Ascending aorta (tissue), 2 donors: ENCODE measurements at regions of chr15 and their contacts with region 1.

Region 1: DNA sequence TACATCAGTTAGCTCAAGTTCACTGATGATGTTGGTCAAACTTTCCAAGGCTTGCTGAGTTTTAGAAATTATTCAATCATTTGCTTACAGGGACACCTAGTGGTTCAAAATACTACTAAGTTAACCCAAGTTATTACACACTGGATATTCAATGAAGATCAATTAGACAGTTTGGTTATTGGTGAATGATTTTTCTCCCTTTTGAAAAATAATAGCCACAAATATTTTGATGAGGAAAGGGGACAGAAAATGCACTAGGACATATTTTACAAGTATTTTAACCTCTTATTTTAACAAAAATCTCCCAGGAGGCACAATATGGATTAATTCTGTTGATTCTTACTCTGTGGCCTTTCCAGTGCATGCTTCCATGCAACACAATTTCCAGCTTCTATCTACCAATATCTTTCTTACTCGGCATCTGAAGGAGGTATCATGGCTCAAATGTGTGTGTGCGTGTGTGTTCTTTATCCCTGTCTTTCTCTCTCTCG is 20.1 kb upstream of the GOLGA6L2 start:
- DNase-seq: no peak
- H3K4me3 ChIP-seq: no peak overlapping the region
- H3K27ac ChIP-seq: no peak overlapping the region
- H3K4me1 ChIP-seq: peaks cover 0 to 3% of the 10 kb centered on the region in 2 donors
- H3K27me3 ChIP-seq: no peaks in the 10 kb centered on the region
- CTCF ChIP-seq: peak in 2 of 3 experiments; percentile 34 to 51

Region 2: GRCh38 chr15:23039151-23039916 is 427.8 kb before region 1 on chr15 and contains the start of gene TUBGCP5:
- intact Hi-C with region 1: loop called (anchors 5 kb)
- DNase-seq: peak; percentile 91 to 99
- H3K4me3 ChIP-seq: peak within 1 kb of the TSS; percentile 75 to 85
- H3K27ac ChIP-seq: peak within 1 kb of the TSS; percentile 68 to 76
- H3K4me1 ChIP-seq: peaks cover 0 to 8% of the 10 kb centered on the region in 2 donors
- H3K27me3 ChIP-seq: no peaks in the 10 kb centered on the region
- CTCF ChIP-seq: peak in 2 of 3 experiments; percentile 46 to 51
- total RNA-seq, gene TUBGCP5: 17.1 TPM

Region 3: GRCh38 chr15:23372284-23372683 is 94.9 kb before region 1 on chr15:
- intact Hi-C with region 1: loop called (anchors 5 kb)
- DNase-seq: peak; percentile 12 to 68
- H3K4me3 ChIP-seq: no peak overlapping the region
- H3K27ac ChIP-seq: peak overlapping the region; percentile 66 to 67
- H3K4me1 ChIP-seq: peaks cover 2 to 19% of the 10 kb centered on the region in 2 donors
- H3K27me3 ChIP-seq: no peaks in the 10 kb centered on the region
- CTCF ChIP-seq: no peak

Region 4: DNA sequence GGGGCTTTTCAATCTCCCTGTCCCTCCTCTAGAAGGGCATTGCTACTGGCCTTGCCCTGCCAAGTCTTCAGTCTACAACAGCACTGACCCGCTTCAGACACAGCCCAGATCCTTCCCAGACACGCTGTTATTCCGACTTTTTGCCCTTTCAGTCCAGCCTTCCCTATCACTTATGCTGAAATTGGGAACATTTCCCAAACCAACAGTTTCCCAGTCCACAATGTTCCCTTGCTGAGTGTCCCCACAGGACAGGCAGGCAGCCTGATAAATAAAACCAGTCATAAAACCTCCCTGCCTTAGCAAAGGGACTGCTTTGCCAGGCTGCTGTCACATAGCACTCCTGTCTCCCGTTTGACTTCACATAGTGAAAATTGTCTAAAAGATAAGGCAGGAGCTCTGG is 63.6 kb before region 1 on chr15:
- intact Hi-C with region 1: loop called (anchors 2 kb)
- DNase-seq: peak in 1 of 2 donors; percentile 81
- H3K4me3 ChIP-seq: peak overlapping the region; percentile 5 to 55
- H3K27ac ChIP-seq: peak overlapping the region; percentile 84 to 87
- H3K4me1 ChIP-seq: peaks cover 5 to 27% of the 10 kb centered on the region in 2 donors
- H3K27me3 ChIP-seq: no peaks in the 10 kb centered on the region
- CTCF ChIP-seq: no peak

Region 5: GRCh38 chr15:23422946-23423708 is 44.0 kb before region 1 on chr15:
- intact Hi-C with region 1: loop called (anchors 5 kb)
- DNase-seq: peak in 1 of 2 donors; percentile 64
- H3K4me3 ChIP-seq: no peak overlapping the region
- H3K27ac ChIP-seq: peak overlapping the region; percentile 71 to 86
- H3K4me1 ChIP-seq: peaks cover 6 to 14% of the 10 kb centered on the region in 2 donors
- H3K27me3 ChIP-seq: no peaks in the 10 kb centered on the region
- CTCF ChIP-seq: no peak

Region 6: DNA sequence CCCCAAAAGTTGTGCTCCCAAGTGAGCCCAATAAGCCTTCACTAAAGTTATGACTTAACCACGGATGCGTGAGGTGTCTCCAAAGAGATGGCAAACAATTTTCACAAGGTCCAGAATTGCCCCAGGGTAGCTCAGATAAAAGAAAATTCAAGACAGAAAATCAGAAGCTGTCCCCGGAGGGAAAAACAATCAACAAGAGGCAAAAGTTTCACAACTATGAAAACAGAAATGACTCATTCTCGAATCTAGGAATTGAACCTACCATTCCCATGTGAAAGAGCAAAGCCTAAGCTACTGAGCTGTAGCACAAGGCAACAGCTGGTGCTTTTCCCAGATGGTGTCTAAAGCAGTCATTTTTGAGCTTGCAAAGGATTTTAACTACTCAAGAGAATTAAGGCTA is 64.9 kb after region 1 on chr15:
- intact Hi-C with region 1: no loop called
- DNase-seq: no peak
- H3K4me3 ChIP-seq: no peak overlapping the region
- H3K27ac ChIP-seq: no peak overlapping the region
- H3K4me1 ChIP-seq: no peaks in the 10 kb centered on the region
- H3K27me3 ChIP-seq: no peaks in the 10 kb centered on the region
- CTCF ChIP-seq: no peak